GM12878 (cell line): ENCODE measurements at regions of chr16 and their contacts with region 1.

Region 1: DNA sequence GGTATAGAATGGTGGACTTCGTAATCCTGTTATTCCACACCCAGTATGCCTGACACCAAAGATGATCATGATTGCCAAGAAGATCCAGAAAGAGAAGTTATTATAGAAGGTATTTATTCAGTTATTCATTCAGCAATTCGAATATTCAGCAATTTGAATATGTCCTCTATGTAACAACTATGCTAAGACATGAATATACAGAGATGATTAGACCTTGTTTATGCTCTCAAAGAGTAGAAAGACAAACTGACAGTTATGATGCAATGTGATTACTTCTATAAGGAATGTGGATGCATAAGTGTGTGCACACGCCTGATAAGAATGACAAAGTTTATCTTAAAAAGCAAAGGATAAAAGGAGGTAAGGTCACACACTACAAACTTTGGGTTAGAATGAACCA is 218.1 kb downstream of the CDH11 start:
- DNase-seq: no peak
- ATAC-seq: no peak
- H3K4me3 ChIP-seq: no peak overlapping the region
- H3K27ac ChIP-seq: no peak overlapping the region
- H3K4me1 ChIP-seq: no peaks in the 10 kb centered on the region
- H3K27me3 ChIP-seq: no peaks in the 10 kb centered on the region
- CTCF ChIP-seq: no peak
- EP300 ChIP-seq: no peak
- POLR2A ChIP-seq: no peak
- RAD21 ChIP-seq: no peak

Region 2: DNA sequence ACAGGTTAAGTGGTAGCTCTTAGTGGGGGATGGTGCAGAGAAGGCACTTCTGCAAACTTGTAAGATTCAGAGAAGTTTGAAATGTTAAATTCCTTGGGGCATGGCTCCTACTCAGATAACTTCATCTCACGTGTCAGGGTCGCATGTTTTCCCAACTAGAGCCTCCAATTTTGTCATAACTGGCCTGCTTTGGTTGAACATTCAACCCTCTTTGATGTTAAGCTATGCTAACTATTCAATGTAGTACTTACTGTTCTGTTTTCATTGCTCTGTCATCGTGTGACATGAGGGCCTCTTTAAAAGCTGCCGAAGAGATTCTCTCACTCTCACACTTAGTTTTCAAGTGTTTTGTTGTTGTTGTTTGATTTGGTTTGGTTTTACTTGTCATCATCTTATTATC is 62.7 kb before region 1 on chr16:
- CTCF ChIA-PET with region 1: no interaction called
- POLR2A ChIA-PET with region 1: no interaction called
- RAD21 ChIA-PET with region 1: no interaction called
- SMC1A ChIA-PET with region 1: no interaction called
- in situ Hi-C with region 1: no loop called
- intact Hi-C with region 1: no loop called
- DNase-seq: no peak
- ATAC-seq: no peak
- H3K4me3 ChIP-seq: no peak overlapping the region
- H3K27ac ChIP-seq: no peak overlapping the region
- H3K4me1 ChIP-seq: no peaks in the 10 kb centered on the region
- H3K27me3 ChIP-seq: no peaks in the 10 kb centered on the region
- CTCF ChIP-seq: no peak
- EP300 ChIP-seq: no peak
- POLR2A ChIP-seq: no peak
- RAD21 ChIP-seq: no peak

Region 3: GRCh38 chr16:64880994-64881393 is 22.8 kb before region 1 on chr16:
- CTCF ChIA-PET with region 1: no interaction called
- POLR2A ChIA-PET with region 1: no interaction called
- RAD21 ChIA-PET with region 1: no interaction called
- SMC1A ChIA-PET with region 1: no interaction called
- in situ Hi-C with region 1: no loop called
- intact Hi-C with region 1: no loop called
- DNase-seq: no peak
- ATAC-seq: no peak
- H3K4me3 ChIP-seq: no peak overlapping the region
- H3K27ac ChIP-seq: no peak overlapping the region
- H3K4me1 ChIP-seq: no peaks in the 10 kb centered on the region
- H3K27me3 ChIP-seq: no peaks in the 10 kb centered on the region
- CTCF ChIP-seq: no peak
- EP300 ChIP-seq: no peak
- POLR2A ChIP-seq: no peak
- RAD21 ChIP-seq: no peak

Region 4: DNA sequence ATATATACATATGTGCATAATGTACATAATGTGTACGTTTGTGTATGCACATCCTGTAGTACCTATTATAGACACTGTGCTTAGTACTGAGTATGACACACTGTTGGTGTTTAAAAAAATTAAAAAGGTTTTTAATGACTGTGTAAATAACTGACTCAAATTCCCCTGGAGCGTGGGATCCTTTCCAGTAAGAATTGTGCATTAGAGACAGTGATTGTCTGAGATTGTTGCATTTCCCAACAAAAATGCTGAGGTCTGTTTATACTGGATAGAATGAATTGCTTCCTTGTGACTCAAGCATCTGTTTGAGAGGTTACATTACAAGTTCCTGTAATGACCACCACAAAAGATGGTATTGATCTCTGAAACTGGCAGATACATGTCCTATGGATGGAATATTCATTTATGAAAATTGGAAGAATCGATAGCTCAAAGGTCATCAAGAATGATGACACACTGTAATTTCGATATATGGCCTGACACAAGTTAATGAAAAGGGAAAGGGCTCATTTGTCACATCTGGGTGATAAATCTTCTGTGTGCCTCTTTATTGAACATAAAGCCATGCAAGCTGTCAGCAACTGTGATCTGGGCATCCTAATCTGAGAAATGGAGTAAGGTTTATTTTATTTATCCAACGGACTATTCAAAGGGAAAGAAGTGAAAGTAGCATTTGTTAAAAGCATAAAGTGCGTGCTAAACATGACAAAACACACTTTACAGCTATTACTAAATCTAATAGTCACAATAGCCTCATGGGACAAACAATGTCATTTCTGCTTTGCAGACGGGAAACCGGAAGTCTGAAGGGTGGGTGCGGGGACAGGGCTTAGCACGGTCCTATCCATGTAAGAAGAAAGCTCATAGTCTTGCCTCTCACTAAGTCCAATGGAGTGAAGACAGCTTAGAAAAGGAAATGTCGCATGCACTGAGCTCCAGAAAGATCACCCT is 10.7 kb before region 1 on chr16:
- CTCF ChIA-PET with region 1: no interaction called
- POLR2A ChIA-PET with region 1: no interaction called
- RAD21 ChIA-PET with region 1: no interaction called
- SMC1A ChIA-PET with region 1: interaction called, 11 read pairs
- in situ Hi-C with region 1: no loop called
- intact Hi-C with region 1: no loop called
- DNase-seq: no peak
- ATAC-seq: no peak
- H3K4me3 ChIP-seq: no peak overlapping the region
- H3K27ac ChIP-seq: no peak overlapping the region
- H3K4me1 ChIP-seq: no peaks in the 10 kb centered on the region
- H3K27me3 ChIP-seq: no peaks in the 10 kb centered on the region
- CTCF ChIP-seq: no peak
- EP300 ChIP-seq: no peak
- POLR2A ChIP-seq: no peak
- RAD21 ChIP-seq: no peak

Region 5: DNA sequence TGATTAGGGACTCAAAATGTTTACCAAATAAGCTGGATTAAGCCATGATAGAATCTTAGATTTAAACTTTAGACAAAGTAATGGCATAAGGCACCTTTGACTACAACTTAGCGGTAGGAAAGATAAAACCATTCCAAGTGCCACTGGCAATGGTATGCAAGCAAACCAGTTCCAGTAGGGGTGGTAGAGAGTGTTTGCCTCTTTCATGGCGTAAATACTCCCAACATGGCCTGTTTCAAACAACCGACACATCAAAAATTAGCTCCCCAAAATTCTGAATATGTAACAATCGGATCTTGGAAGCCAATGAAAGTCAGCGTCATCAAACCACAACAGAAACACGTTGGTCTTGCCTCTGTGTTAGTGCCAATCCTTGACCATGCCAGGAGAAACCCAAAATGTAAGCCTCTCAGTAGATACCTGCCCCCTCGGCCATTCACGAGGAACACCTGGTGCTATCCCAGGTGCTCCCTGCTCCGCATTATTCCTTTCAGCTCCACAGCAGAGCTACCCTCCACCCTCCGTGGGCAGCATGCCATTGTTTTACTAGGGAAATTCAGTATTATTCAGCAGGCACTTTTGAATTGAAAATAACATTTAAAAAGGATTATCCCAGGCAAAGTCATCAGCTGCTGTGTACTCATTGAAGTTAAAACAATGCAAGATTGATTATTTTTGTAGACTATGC is 525.9 kb after region 1 on chr16:
- CTCF ChIA-PET with region 1: no interaction called
- POLR2A ChIA-PET with region 1: no interaction called
- RAD21 ChIA-PET with region 1: no interaction called
- SMC1A ChIA-PET with region 1: no interaction called
- in situ Hi-C with region 1: no loop called
- intact Hi-C with region 1: no loop called
- DNase-seq: no peak
- ATAC-seq: no peak
- H3K4me3 ChIP-seq: no peak overlapping the region
- H3K27ac ChIP-seq: no peak overlapping the region
- H3K4me1 ChIP-seq: no peaks in the 10 kb centered on the region
- H3K27me3 ChIP-seq: no peaks in the 10 kb centered on the region
- CTCF ChIP-seq: no peak
- EP300 ChIP-seq: no peak
- POLR2A ChIP-seq: no peak
- RAD21 ChIP-seq: no peak